ENCODE measurements at regions of chr11 and their contacts with region 1.

Region 1: GRCh38 chr11:7986768-7987559 is at the start of gene EIF3F:
- DNase-seq: peak; percentile 93
- H3K4me3 ChIP-seq: peak within 1 kb of the TSS; percentile 88 to 96
- H3K27ac ChIP-seq: peak within 1 kb of the TSS in 1 of 2 experiments; percentile 52; a peak in 3 of 4 replicates
- H3K4me1 ChIP-seq: peaks cover 7 to 12% of the 10 kb centered on the region in 2 experiments
- H3K27me3 ChIP-seq: no peaks in the 10 kb centered on the region
- CTCF ChIP-seq: peak; percentile 91
- EP300 ChIP-seq: peak; percentile 30 to 46; a peak in 3 of 4 replicates
- RAD21 ChIP-seq: peak; percentile 76
- polyA plus RNA-seq, gene EIF3F: 213 and 341 TPM in 2 replicates

Region 2: DNA sequence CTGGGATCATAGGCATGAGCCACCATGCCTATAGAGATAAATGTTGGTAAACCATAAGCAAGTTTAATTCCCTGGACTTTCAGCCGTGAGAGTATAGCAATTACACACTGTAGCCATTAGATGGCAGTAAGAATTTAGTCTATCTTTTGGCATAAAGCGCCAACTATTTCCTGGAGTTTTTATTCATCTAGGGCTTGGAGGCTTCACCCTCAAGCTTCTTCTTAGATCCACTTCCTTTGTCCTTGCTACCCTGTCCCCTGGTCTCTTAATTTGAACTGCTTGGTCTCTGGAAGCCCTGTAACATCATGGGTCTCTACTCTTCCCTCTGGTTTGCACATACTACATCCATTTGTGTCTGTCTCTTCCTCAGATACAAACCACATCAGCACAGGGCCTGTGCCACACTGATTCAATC is 94.1 kb before region 1 on chr11:
- CTCF ChIA-PET with region 1: interaction called, 76 read pairs
- POLR2A ChIA-PET with region 1: interaction called, 3 read pairs
- DNase-seq: peak; percentile 56
- H3K4me3 ChIP-seq: no peak overlapping the region; a peak in 1 of 4 replicates
- H3K27ac ChIP-seq: 0 out of 4 replicates have a peak overlapping the region, but pooled peaks of 1 of the 2 experiments have one; percentile 4
- H3K4me1 ChIP-seq: no peaks in the 10 kb centered on the region
- H3K27me3 ChIP-seq: no peaks in the 10 kb centered on the region
- CTCF ChIP-seq: peak; percentile 80
- EP300 ChIP-seq: no peak
- RAD21 ChIP-seq: peak; percentile 78

Region 3: GRCh38 chr11:7904914-7905313 is 82.0 kb before region 1 on chr11:
- CTCF ChIA-PET with region 1: interaction called, 11 read pairs
- POLR2A ChIA-PET with region 1: no interaction called
- DNase-seq: no peak
- H3K4me3 ChIP-seq: no peak overlapping the region
- H3K27ac ChIP-seq: no peak overlapping the region
- H3K4me1 ChIP-seq: no peaks in the 10 kb centered on the region; a peak in 2 of 4 replicates
- H3K27me3 ChIP-seq: no peaks in the 10 kb centered on the region
- CTCF ChIP-seq: peak; percentile 57
- EP300 ChIP-seq: no peak
- RAD21 ChIP-seq: peak; percentile 48

Region 4: GRCh38 chr11:7965386-7965785 is 21.6 kb before region 1 on chr11 and contains the start of gene NLRP10:
- CTCF ChIA-PET with region 1: interaction called, 14 read pairs
- POLR2A ChIA-PET with region 1: no interaction called
- DNase-seq: no peak
- H3K4me3 ChIP-seq: no peak within 1 kb of the TSS
- H3K27ac ChIP-seq: peak within 1 kb of the TSS in 1 of 2 experiments; percentile 62; a peak in 2 of 4 replicates
- H3K4me1 ChIP-seq: peaks cover 0 to 12% of the 10 kb centered on the region in 2 experiments; a peak in 1 of 4 replicates
- H3K27me3 ChIP-seq: no peaks in the 10 kb centered on the region
- CTCF ChIP-seq: no peak
- EP300 ChIP-seq: no peak
- RAD21 ChIP-seq: no peak
- polyA plus RNA-seq, gene NLRP10: 0.05 and 0.39 TPM in 2 replicates

Region 5: DNA sequence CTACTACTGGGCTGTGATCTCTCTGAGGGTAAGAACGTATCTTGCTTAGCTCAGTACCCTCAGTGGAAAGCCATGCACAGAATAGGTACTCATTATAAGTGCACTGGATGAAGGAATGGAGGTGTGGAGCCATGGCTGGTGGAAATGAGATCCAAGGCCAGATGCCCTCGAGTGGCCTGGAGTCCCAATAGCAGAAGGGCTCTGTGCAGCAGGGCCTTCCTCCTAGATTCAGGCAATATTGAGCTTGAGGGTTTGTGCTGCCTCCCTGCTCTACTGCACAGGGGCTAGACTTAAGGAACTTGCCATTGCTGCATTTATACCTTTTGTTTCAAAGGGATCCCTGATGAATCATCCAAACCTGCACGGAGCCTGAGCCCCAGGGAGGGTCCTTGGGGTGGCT is 60.4 kb after region 1 on chr11:
- CTCF ChIA-PET with region 1: no interaction called
- POLR2A ChIA-PET with region 1: no interaction called
- DNase-seq: no peak
- H3K4me3 ChIP-seq: no peak overlapping the region
- H3K27ac ChIP-seq: no peak overlapping the region
- H3K4me1 ChIP-seq: no peaks in the 10 kb centered on the region; a peak in 1 of 4 replicates
- H3K27me3 ChIP-seq: no peaks in the 10 kb centered on the region
- CTCF ChIP-seq: no peak
- EP300 ChIP-seq: no peak
- RAD21 ChIP-seq: no peak